Calu3 (cell line): ENCODE measurements at regions of chr7 and their contacts with region 1.

Region 1: DNA sequence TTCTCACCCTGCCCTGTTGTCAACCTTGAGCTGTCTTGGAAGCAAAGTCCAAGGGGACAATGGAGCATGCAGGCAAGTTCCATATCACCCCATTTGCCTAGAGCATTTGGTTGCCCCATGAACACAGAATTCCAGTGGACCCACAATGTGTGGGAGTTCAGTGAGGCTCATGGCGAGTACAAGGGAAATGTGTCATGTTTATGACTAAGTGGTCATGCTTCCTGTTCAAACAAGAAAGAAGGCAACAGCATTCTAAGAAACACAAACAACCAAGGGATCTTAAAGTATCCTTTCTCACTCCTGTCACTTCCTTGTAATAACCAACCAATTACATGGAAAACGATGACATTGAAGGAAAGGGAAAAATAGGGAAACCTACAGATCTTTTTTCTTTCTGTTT is 513.0 kb downstream of the INHBA start:
- DNase-seq: peak; percentile 54
- H3K4me3 Mint-ChIP-seq: no peak overlapping the region
- H3K27ac Mint-ChIP-seq: peak overlapping the region; percentile 95
- H3K4me1 Mint-ChIP-seq: peaks cover 49% of the 10 kb centered on the region
- H3K27me3 Mint-ChIP-seq: no peaks in the 10 kb centered on the region
- CTCF ChIP-seq: no peak

Region 2: DNA sequence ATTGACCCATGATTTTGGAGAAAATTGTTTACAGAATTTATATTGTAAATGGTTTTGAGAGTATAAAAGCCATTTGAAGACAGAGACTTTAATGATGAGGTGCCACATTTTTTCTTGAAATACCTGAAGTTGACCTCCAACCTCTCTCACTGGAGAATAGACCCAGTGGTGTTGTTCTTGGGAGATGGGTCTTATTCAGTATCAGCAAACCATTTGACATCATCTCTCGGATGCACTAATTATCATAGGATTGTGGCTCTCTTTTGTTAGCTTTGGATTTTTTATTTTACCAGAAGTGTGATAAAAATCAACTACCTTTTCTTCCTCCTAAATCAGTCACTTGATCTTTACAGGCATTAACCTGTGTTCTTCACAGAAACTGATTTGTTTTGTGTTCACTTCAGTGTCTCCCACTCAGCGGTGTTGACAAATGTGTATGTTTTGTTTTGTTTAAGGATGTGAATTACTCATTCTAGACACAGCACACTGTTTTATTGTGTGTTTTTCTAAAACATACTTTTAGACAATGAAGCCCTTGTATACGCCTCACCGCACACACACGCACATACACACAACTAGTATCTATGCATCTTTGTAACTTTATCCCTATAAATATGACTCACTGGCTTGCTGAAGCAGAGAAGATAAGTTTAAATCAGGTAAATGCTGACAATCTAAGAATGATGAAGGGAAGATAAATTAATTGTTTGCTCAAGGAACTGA is 57.4 kb after region 1 on chr7:
- CTCF ChIA-PET with region 1: no interaction called
- intact Hi-C with region 1: loop called (anchors 1 kb)
- DNase-seq: peak; percentile 69
- H3K4me3 Mint-ChIP-seq: peak overlapping the region; percentile 22
- H3K27ac Mint-ChIP-seq: peak overlapping the region; percentile 96
- H3K4me1 Mint-ChIP-seq: peaks cover 42% of the 10 kb centered on the region
- H3K27me3 Mint-ChIP-seq: no peaks in the 10 kb centered on the region
- CTCF ChIP-seq: no peak